ENCODE measurements at regions of chr1 and their contacts with region 1.

Region 1: GRCh38 chr1:93304716-93305138 is 41.0 kb upstream of the DR1 start:
- DNase-seq: peak; percentile 61 to 84 (median 77)
- H3K4me3 ChIP-seq: no peak overlapping the region
- H3K27ac ChIP-seq: no peak overlapping the region
- H3K4me1 ChIP-seq: no peaks in the 10 kb centered on the region
- H3K27me3 ChIP-seq: no peaks in the 10 kb centered on the region

Region 2: DNA sequence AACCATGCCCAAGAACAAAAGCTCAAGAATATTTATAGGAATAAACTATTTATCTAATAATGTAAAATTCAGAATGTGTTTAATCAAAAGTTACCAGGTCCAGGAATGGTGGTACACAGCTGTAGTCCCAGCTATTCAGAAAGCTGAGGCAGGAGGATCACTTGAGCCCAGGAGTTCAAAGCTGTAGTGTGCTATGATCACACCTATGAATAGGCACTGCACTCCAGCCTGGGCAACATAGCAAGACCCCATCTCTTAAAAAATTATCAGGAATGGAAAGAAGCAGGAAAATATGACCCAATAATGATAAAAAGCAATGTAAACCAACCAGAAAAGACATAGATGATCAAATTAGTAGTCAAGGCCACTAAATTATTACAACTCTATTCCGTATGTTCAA is 21.2 kb before region 1 on chr1:
- CTCF ChIA-PET with region 1: no interaction called
- POLR2A ChIA-PET with region 1: no interaction called
- DNase-seq: no peak
- H3K4me3 ChIP-seq: no peak overlapping the region
- H3K27ac ChIP-seq: no peak overlapping the region
- H3K4me1 ChIP-seq: no peaks in the 10 kb centered on the region
- H3K27me3 ChIP-seq: no peaks in the 10 kb centered on the region

Region 3: DNA sequence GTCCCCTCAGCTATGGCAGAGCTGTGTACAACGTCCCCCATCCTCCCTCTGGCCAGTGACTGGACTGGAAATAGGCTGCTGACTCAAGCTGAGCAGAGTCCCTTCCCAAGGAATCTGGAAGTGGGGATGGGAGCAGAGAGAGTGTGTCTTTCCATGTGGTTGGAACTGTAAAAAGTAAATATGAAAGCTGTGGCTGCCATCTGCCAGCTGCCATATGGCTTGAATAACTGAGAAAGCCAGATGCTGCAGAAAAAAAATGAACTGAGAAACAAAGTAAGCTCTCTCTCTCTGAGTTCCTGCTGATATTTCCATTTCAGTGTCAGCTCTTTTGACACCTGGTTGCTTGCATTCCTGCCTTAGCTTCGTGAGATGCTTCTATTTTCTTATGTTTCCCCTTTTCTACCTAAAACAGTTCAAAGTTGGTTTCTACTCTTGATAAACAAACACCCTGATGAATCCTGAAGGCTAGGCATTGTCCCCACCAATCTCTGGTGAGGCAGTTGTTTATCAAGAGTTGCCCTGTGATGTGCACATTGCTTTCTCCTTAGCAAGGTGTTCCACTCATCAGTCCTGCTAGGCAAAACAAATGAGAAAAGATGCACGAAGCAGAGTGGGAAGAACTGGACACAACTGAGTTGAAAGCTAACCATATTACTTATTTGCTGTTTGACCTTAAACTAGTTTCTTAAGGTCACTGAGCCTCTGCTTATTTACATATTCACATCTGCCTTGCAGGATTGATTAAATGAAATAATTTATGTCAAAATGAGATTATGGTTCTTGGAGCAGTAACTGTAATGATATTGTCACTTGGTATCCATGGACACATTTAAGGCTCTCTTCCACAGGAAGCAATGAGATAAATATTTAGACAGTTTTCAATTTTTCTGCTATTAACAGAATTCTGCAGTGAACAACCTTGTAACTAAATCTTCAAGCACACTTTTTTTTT is 24.4 kb after region 1 on chr1:
- CTCF ChIA-PET with region 1: interaction called, 15 read pairs
- POLR2A ChIA-PET with region 1: no interaction called
- DNase-seq: no peak
- H3K4me3 ChIP-seq: no peak overlapping the region
- H3K27ac ChIP-seq: no peak overlapping the region
- H3K4me1 ChIP-seq: no peaks in the 10 kb centered on the region
- H3K27me3 ChIP-seq: no peaks in the 10 kb centered on the region

Region 4: DNA sequence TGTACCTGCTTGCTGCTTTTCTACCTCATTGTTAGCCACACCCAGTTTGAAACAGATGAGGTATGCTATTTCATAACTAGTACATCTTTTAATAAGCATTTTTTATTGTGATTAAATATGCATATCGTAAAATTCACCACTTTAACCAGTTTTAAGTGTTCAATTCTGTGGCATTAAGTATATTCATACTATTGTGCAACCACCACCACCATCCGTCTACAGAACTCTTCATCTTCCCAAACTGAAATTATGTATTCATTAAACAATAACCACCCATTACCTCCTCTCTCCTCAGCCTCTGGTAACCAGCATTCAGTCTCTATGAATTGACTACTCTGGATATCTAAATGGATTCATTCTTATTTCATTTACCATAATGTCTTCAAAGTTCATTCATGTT is 61.1 kb after region 1 on chr1:
- CTCF ChIA-PET with region 1: no interaction called
- POLR2A ChIA-PET with region 1: no interaction called
- DNase-seq: no peak
- H3K4me3 ChIP-seq: no peak overlapping the region
- H3K27ac ChIP-seq: no peak overlapping the region
- H3K4me1 ChIP-seq: peaks cover 0 to 6% (median 2%) of the 10 kb centered on the region in 4 experiments
- H3K27me3 ChIP-seq: no peaks in the 10 kb centered on the region

Region 5: GRCh38 chr1:93437976-93438605 is 133.4 kb after region 1 on chr1:
- CTCF ChIA-PET with region 1: interaction called, 16 read pairs
- POLR2A ChIA-PET with region 1: no interaction called
- DNase-seq: peak; percentile 49 to 81 (median 78)
- H3K4me3 ChIP-seq: no peak overlapping the region
- H3K27ac ChIP-seq: no peak overlapping the region
- H3K4me1 ChIP-seq: no peaks in the 10 kb centered on the region
- H3K27me3 ChIP-seq: peaks cover 0 to 3% (median 0%) of the 10 kb centered on the region in 5 experiments

Measured in common myeloid progenitor, CD34-positive (primary cell).